Stomach (tissue), 19 donors: ENCODE measurements at regions of chr3 and their contacts with region 1.

Region 1: GRCh38 chr3:169662132-169662842 is 1.2 kb downstream of the MECOM start:
- DNase-seq: peak; percentile 79 to 93
- H3K4me3 ChIP-seq: peak overlapping the region; percentile 63 to 82 (median 74)
- H3K27ac ChIP-seq: peak overlapping the region; percentile 93 to 97 (median 95)
- H3K4me1 ChIP-seq: peaks cover 14 to 83% (median 45%) of the 10 kb centered on the region in 4 donors
- H3K27me3 ChIP-seq: peaks cover 0 to 98% (median 41%) of the 10 kb centered on the region in 3 donors
- CTCF ChIP-seq: peak in 5 of 7 experiments; percentile 40 to 59 (median 52)
- EP300 ChIP-seq: no peak
- POLR2A ChIP-seq: no peak

Region 2: GRCh38 chr3:169149349-169149890 is 512.9 kb before region 1 on chr3:
- intact Hi-C with region 1: loop called (anchors 5 kb)
- DNase-seq: peak; percentile 93 to 96
- H3K4me3 ChIP-seq: peak overlapping the region; percentile 55 to 62 (median 56)
- H3K27ac ChIP-seq: peak overlapping the region; percentile 86 to 95 (median 94)
- H3K4me1 ChIP-seq: peaks cover 20 to 69% (median 45%) of the 10 kb centered on the region in 4 donors
- H3K27me3 ChIP-seq: peaks cover 0 to 34% (median 23%) of the 10 kb centered on the region in 3 donors
- CTCF ChIP-seq: peak in 5 of 7 experiments; percentile 81 to 94 (median 85)
- EP300 ChIP-seq: no peak
- POLR2A ChIP-seq: no peak

Region 3: DNA sequence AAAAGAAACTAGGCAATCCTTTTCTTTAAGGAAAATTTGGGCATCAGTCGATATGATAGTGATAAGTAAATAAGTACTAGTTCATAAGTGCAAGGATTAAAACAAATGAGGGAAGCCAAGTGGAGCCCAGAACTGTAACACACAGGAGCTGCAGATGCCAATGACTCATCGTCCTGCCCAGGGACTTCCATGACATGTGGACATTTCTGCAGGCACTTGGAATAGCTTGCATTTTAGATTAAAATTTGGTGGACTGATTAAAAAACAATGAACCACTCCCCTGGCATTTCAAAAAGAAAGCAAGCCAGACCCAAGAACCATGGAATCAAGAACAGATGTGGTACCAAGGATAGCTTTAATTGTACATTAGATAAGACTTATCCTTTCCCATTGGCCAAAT is 252.0 kb after region 1 on chr3:
- intact Hi-C with region 1: no loop called
- DNase-seq: no peak
- H3K4me3 ChIP-seq: no peak overlapping the region
- H3K27ac ChIP-seq: no peak overlapping the region
- H3K4me1 ChIP-seq: peaks cover 0 to 4% (median 0%) of the 10 kb centered on the region in 4 donors
- H3K27me3 ChIP-seq: no peaks in the 10 kb centered on the region
- CTCF ChIP-seq: no peak
- EP300 ChIP-seq: no peak
- POLR2A ChIP-seq: no peak

Region 4: GRCh38 chr3:169984292-169984691 is 322.0 kb after region 1 on chr3:
- intact Hi-C with region 1: no loop called
- DNase-seq: peak; percentile 22 to 50
- H3K4me3 ChIP-seq: no peak overlapping the region
- H3K27ac ChIP-seq: no peak overlapping the region
- H3K4me1 ChIP-seq: peaks cover 0 to 21% (median 3%) of the 10 kb centered on the region in 4 donors
- H3K27me3 ChIP-seq: no peaks in the 10 kb centered on the region
- CTCF ChIP-seq: no peak
- EP300 ChIP-seq: no peak
- POLR2A ChIP-seq: no peak